ENCODE measurements at regions of chr21 and their contacts with region 1.

Region 1: GRCh38 chr21:25561668-25562641 is 45.3 kb downstream of the MRPL39 start:
- DNase-seq: peak; percentile 92
- H3K4me3 Mint-ChIP-seq: peak overlapping the region; percentile 90
- H3K27ac Mint-ChIP-seq: peak overlapping the region; percentile 99
- H3K4me1 Mint-ChIP-seq: peaks cover 54% of the 10 kb centered on the region
- H3K27me3 Mint-ChIP-seq: peaks cover 2% of the 10 kb centered on the region

Region 2: DNA sequence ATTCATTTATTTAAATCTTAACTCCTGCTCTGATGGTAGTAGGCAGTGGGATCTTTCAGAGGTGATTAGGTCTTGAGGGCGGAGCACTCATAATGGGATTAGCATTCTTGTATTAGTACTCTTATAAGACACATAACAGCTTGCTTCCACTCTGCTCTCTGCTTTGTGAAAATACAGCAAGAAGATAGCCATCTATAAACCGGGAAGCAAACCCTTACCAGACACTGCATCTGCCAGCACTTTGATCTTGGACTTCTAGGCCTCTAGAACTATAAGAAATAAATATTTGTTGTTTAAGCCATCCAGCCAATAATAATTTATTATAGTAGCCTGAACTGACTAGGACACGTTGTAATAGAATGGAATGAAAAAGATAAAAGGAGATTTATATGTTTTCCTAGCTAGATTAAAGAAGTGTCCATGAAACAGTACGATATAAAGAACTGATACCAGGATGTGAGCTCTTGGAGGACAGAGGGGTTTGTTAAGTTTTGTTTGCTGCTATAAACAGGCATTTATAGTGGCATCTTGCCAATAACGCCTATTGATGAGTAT is 824.6 kb before region 1 on chr21:
- intact Hi-C with region 1: no loop called
- DNase-seq: no peak
- H3K4me3 Mint-ChIP-seq: no peak overlapping the region
- H3K27ac Mint-ChIP-seq: no peak overlapping the region
- H3K4me1 Mint-ChIP-seq: no peaks in the 10 kb centered on the region
- H3K27me3 Mint-ChIP-seq: no peaks in the 10 kb centered on the region

Region 3: GRCh38 chr21:25421327-25422028 is 140.5 kb before region 1 on chr21:
- intact Hi-C with region 1: loop called (anchors 1 kb)
- DNase-seq: peak; percentile 89
- H3K4me3 Mint-ChIP-seq: peak overlapping the region; percentile 70
- H3K27ac Mint-ChIP-seq: peak overlapping the region; percentile 93
- H3K4me1 Mint-ChIP-seq: peaks cover 39% of the 10 kb centered on the region
- H3K27me3 Mint-ChIP-seq: no peaks in the 10 kb centered on the region

Region 4: DNA sequence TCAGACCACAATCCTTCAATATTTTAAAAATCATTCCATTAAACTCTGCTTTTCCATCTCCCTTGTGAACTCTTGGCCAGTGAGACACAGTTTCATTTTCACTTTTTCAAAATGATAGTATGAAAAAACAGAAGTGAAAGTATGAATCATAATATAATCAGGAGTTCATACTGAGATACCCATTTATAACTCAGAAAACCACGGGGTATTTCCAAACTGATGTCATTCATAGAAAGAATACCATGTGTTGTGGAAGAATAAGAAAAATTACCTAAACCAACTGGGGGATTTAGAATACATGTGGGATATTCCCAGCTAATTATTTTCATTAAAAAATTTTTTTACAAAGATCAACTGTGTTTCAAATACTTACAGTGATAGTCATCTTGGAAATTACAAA is 104.5 kb before region 1 on chr21:
- intact Hi-C with region 1: loop called (anchors 1 kb)
- DNase-seq: peak; percentile 67
- H3K4me3 Mint-ChIP-seq: peak overlapping the region; percentile 60
- H3K27ac Mint-ChIP-seq: peak overlapping the region; percentile 79
- H3K4me1 Mint-ChIP-seq: peaks cover 50% of the 10 kb centered on the region
- H3K27me3 Mint-ChIP-seq: no peaks in the 10 kb centered on the region

Region 5: DNA sequence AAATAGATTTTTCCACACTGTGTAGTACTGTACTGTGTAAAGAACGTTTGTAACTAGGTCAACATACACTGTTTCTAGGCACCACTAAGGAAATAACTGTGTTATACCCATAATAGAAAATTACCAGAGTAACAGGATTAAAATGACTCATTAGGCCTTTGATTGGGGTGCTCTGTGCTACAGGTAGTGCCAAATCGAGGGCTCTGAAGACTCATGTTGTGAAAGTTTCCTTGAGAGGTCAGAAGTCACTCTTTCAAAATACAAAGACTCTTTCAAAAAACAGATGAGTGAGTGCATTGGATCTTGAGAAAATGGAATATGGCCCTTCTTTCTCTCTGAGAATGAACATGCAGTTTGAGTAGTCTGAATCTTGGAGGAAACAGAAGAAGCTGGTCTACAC is 97.7 kb before region 1 on chr21:
- intact Hi-C with region 1: loop called (anchors 1 kb)
- DNase-seq: peak; percentile 73
- H3K4me3 Mint-ChIP-seq: peak overlapping the region; percentile 69
- H3K27ac Mint-ChIP-seq: peak overlapping the region; percentile 98
- H3K4me1 Mint-ChIP-seq: peaks cover 48% of the 10 kb centered on the region
- H3K27me3 Mint-ChIP-seq: no peaks in the 10 kb centered on the region

Region 6: DNA sequence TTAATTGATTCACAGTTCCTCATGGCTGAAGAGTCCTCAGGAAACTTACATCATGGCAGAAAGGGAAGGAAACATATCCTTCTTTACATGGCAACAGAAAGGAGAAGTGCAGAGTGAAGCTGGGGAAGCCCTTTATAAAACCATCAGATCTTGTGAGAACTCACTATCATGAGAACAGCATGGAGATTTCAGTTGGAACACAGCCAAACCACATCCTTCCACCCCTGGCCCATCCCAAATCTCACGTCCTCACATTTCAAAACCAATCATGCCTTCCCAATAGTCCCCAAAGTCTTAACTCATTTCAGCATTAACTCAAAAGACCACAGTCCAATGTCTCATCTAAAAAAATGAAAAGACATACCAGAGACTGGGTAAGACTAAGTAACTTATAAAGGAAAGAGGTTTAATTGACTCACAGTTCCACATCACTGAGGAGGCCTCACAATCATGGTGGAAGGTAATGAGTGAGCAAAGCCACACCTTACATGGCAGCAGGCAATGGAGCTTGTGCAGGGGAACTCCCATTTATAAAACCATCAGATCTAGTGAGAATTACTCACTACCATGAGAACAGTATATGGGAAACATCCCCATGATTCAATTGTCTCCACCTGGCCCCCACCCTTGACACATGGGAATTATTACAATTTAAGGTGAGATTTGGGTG is 59.8 kb before region 1 on chr21:
- intact Hi-C with region 1: loop called (anchors 1 kb)
- DNase-seq: peak; percentile 67
- H3K4me3 Mint-ChIP-seq: peak overlapping the region; percentile 52
- H3K27ac Mint-ChIP-seq: peak overlapping the region; percentile 96
- H3K4me1 Mint-ChIP-seq: peaks cover 39% of the 10 kb centered on the region
- H3K27me3 Mint-ChIP-seq: no peaks in the 10 kb centered on the region

Region 7: GRCh38 chr21:25509862-25510261 is 52.1 kb before region 1 on chr21:
- intact Hi-C with region 1: loop called (anchors 1 kb)
- DNase-seq: no peak
- H3K4me3 Mint-ChIP-seq: peak overlapping the region; percentile 39
- H3K27ac Mint-ChIP-seq: peak overlapping the region; percentile 81
- H3K4me1 Mint-ChIP-seq: peaks cover 46% of the 10 kb centered on the region
- H3K27me3 Mint-ChIP-seq: no peaks in the 10 kb centered on the region

Region 8: GRCh38 chr21:27447843-27448242 is 1885.9 kb after region 1 on chr21:
- intact Hi-C with region 1: no loop called
- DNase-seq: no peak
- H3K4me3 Mint-ChIP-seq: no peak overlapping the region
- H3K27ac Mint-ChIP-seq: no peak overlapping the region
- H3K4me1 Mint-ChIP-seq: no peaks in the 10 kb centered on the region
- H3K27me3 Mint-ChIP-seq: no peaks in the 10 kb centered on the region

Measured in activated CD4-positive, alpha-beta T cell treated with anti-CD3 and anti-CD28 coated beads, Interleukin-2, amount 10 ng/mL, durations not matched to agents 24 days and 14 days (primary cell).